ENCODE measurements at regions of chr6 and their contacts with region 1.

Region 1: GRCh38 chr6:53464921-53465460 is 79.9 kb downstream of the GCLC start:
- DNase-seq: peak; percentile 95
- H3K4me3 Mint-ChIP-seq: peak overlapping the region; percentile 6
- H3K27ac Mint-ChIP-seq: peak overlapping the region; percentile 99
- H3K4me1 Mint-ChIP-seq: peaks cover 73% of the 10 kb centered on the region
- H3K27me3 Mint-ChIP-seq: no peaks in the 10 kb centered on the region
- CTCF ChIP-seq: no peak

Region 2: GRCh38 chr6:53359072-53359842 is 105.7 kb before region 1 on chr6:
- CTCF ChIA-PET with region 1: no interaction called
- POLR2A ChIA-PET with region 1: interaction called, 10 read pairs
- intact Hi-C with region 1: no loop called
- DNase-seq: peak; percentile 95
- H3K4me3 Mint-ChIP-seq: peak overlapping the region; percentile 77
- H3K27ac Mint-ChIP-seq: peak overlapping the region; percentile 91
- H3K4me1 Mint-ChIP-seq: peaks cover 37% of the 10 kb centered on the region
- H3K27me3 Mint-ChIP-seq: no peaks in the 10 kb centered on the region
- CTCF ChIP-seq: no peak

Region 3: DNA sequence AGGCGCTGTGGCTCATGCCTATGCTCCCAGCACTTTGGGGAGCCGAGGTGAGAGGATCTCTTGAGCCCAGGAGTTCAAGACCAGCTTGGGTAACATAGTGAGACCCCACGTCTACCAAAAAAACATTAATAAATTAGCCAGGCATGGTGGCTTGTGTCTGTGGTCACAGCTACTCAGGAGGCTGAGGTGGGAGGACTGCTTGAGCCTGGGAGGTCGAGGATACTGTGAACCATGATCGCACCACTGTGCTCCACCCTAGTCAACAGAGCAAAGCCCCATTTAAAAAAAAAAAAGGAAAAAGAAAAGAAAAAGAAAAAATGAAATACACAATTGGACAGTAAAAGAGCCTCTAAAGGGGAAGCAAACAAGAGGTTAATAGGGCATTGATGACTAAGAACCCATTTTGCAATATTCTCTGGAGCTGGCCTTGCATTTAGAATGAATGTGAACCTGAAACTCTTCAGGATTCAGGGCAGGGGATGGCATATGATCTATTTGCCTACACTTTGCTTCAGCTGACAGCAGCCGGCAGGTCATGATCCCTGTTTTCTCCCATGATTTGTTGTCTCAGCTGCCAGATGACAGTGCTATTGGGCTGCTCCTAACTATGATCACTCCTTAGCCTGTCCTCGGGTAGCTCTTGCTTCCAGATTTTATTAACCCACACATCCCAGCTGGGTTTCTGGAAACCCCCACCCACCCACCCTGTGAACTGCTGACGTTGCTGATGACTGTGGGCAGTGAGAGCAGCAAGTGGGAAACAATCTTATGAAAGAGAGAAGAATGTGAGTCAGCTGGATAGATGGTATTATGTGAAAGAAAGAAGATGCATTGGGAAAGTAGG is 32.5 kb before region 1 on chr6:
- CTCF ChIA-PET with region 1: interaction called, 5 read pairs
- POLR2A ChIA-PET with region 1: interaction called, 24 read pairs
- intact Hi-C with region 1: no loop called
- DNase-seq: peak; percentile 90
- H3K4me3 Mint-ChIP-seq: no peak overlapping the region
- H3K27ac Mint-ChIP-seq: peak overlapping the region; percentile 77
- H3K4me1 Mint-ChIP-seq: peaks cover 20% of the 10 kb centered on the region
- H3K27me3 Mint-ChIP-seq: no peaks in the 10 kb centered on the region
- CTCF ChIP-seq: no peak

Region 4: DNA sequence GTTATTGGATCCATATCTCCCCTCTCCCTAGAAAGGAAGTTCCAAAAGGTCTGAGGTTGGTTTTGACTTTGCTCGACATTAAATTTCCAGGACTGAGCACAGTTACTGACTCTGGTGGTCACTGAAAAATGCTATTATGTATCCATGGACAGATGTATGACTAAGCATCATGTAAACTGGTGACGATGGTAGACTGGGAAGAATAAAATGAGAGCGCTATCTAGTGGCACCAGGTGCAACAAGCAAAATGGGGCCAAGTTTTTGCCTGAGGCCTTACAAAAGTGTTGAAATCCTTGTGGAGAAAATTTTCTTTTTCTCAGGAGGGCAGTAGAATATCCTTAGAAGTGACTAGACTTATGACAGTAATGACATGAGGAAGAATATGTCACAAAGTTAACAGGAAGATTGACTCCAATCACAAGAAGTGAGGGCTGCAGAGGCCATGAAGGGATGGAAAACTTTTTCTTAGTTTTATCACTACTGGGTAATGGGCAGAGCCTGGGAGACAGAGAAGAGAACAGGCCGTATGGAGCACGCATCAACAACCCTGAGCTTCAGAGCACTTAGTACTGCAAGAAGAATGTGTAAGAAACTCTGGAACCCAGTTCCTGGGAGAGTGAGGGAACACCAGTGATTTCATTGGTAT is 27.3 kb before region 1 on chr6:
- CTCF ChIA-PET with region 1: interaction called, 3 read pairs
- POLR2A ChIA-PET with region 1: interaction called, 24 read pairs
- intact Hi-C with region 1: no loop called
- DNase-seq: peak; percentile 81
- H3K4me3 Mint-ChIP-seq: no peak overlapping the region
- H3K27ac Mint-ChIP-seq: no peak overlapping the region
- H3K4me1 Mint-ChIP-seq: peaks cover 31% of the 10 kb centered on the region
- H3K27me3 Mint-ChIP-seq: no peaks in the 10 kb centered on the region
- CTCF ChIP-seq: peak; percentile 12

Region 5: DNA sequence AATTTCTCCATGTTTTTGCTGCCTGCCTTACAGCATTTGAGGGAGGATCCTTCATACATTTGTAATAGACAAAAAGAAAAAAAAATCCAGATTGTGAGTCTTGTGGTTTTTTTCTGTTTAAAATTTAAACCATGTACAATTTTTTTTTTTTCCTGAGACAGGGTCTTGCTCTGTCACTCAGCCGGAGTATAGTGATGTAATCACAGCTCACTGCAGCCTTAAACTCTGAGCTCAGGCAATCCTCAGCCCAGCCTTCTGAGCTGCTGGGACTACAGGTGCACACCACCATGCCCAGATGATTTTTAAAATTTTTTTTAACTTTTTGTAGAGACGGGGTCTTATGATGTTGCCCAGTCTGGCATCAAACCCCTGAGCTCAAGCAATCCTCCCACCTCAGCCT is 17.1 kb before region 1 on chr6:
- CTCF ChIA-PET with region 1: interaction called, 3 read pairs
- POLR2A ChIA-PET with region 1: interaction called, 15 read pairs
- intact Hi-C with region 1: no loop called
- DNase-seq: no peak
- H3K4me3 Mint-ChIP-seq: no peak overlapping the region
- H3K27ac Mint-ChIP-seq: no peak overlapping the region
- H3K4me1 Mint-ChIP-seq: no peaks in the 10 kb centered on the region
- H3K27me3 Mint-ChIP-seq: no peaks in the 10 kb centered on the region
- CTCF ChIP-seq: no peak

Measured in MCF 10A (cell line).